ENCODE measurements at regions of chr1 and their contacts with region 1.

Region 1: DNA sequence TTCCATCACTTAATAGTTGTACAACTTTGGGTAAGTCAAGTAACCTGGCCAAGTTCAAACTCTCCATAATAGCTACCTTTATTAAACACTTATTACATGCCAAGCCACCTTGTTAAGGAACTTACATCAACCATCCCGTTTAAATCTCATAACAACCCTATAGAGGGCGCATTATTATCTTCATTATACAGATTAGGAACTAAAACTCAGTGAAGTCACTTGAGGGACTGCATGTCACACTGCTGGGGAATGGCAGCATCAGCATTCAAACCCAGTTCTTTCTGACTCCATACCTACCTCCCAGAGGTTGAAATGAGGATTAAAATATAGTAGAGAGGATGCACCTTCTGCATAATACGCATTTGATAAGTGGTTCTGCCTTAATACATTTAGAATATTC is 47.1 kb upstream of the PLA2G2C start:
- DNase-seq: no peak
- ATAC-seq: peak in 1 of 4 donors; percentile 62
- H3K4me3 ChIP-seq: no peak overlapping the region
- H3K27ac ChIP-seq: no peak overlapping the region
- H3K4me1 ChIP-seq: peaks cover 0 to 6% (median 0%) of the 10 kb centered on the region in 12 donors
- H3K27me3 ChIP-seq: peaks cover 0 to 43% (median 12%) of the 10 kb centered on the region in 9 donors
- CTCF ChIP-seq: peak in 9 of 12 donors; percentile 14 to 42 (median 32)
- POLR2A ChIP-seq: no peak

Region 2: GRCh38 chr1:20367116-20367585 is 133.8 kb after region 1 on chr1:
- intact Hi-C with region 1: loop called in 3 of 10 experiments (anchors 5 to 10 kb)
- DNase-seq: peak in 4 of 5 donors; percentile 32 to 65 (median 49)
- ATAC-seq: peak; percentile 32 to 88 (median 76)
- H3K4me3 ChIP-seq: peak overlapping the region; percentile 11 to 51 (median 42)
- H3K27ac ChIP-seq: peak overlapping the region in 1 of 12 donors; percentile 48
- H3K4me1 ChIP-seq: peaks cover 0 to 18% (median 5%) of the 10 kb centered on the region in 12 donors
- H3K27me3 ChIP-seq: peaks cover 6 to 79% (median 32%) of the 10 kb centered on the region in 9 donors
- CTCF ChIP-seq: peak in 11 of 12 donors; percentile 21 to 58 (median 47)
- POLR2A ChIP-seq: no peak

Region 3: GRCh38 chr1:20430355-20431175 is 197.2 kb after region 1 on chr1:
- intact Hi-C with region 1: loop called in 1 of 10 experiments (anchors 5 kb)
- DNase-seq: peak in 2 of 5 donors; percentile 31 to 72
- ATAC-seq: peak in 3 of 4 donors; percentile 44 to 58 (median 49)
- H3K4me3 ChIP-seq: no peak overlapping the region
- H3K27ac ChIP-seq: peak overlapping the region in 4 of 12 donors; percentile 33 to 53 (median 44)
- H3K4me1 ChIP-seq: peaks cover 0 to 3% (median 0%) of the 10 kb centered on the region in 12 donors
- H3K27me3 ChIP-seq: peaks cover 0 to 48% (median 15%) of the 10 kb centered on the region in 9 donors
- CTCF ChIP-seq: peak; percentile 38 to 64 (median 54)
- POLR2A ChIP-seq: no peak

Measured in heart left ventricle (tissue), 16 donors.